GM12878 (cell line): ENCODE measurements at regions of chr1 and their contacts with region 1.

Region 1: GRCh38 chr1:41728403-41729202 is 190.1 kb downstream of the HIVEP3 start:
- DNase-seq: peak; percentile 100
- ATAC-seq: peak; percentile 87
- H3K4me3 ChIP-seq: no peak overlapping the region
- H3K27ac ChIP-seq: peak overlapping the region; percentile 93
- H3K4me1 ChIP-seq: peaks cover 56% of the 10 kb centered on the region
- H3K27me3 ChIP-seq: no peaks in the 10 kb centered on the region
- CTCF ChIP-seq: no peak
- EP300 ChIP-seq: peak; percentile 97
- POLR2A ChIP-seq: no peak
- RAD21 ChIP-seq: peak; percentile 23; the same call in 1 of the 2 replicates

Region 2: GRCh38 chr1:41662061-41662764 is 66.4 kb before region 1 on chr1:
- CTCF ChIA-PET with region 1: interaction called, 25 read pairs
- POLR2A ChIA-PET with region 1: interaction called, 17 read pairs
- RAD21 ChIA-PET with region 1: interaction called, 262 read pairs
- SMC1A ChIA-PET with region 1: interaction called, 48 read pairs
- in situ Hi-C with region 1: no loop called
- intact Hi-C with region 1: loop called (anchors 2 kb)
- DNase-seq: no peak
- ATAC-seq: peak; percentile 74
- H3K4me3 ChIP-seq: peak overlapping the region; percentile 80
- H3K27ac ChIP-seq: peak overlapping the region; percentile 28; the same call in 1 of the 2 replicates
- H3K4me1 ChIP-seq: peaks cover 26% of the 10 kb centered on the region
- H3K27me3 ChIP-seq: no peaks in the 10 kb centered on the region
- CTCF ChIP-seq: no peak
- EP300 ChIP-seq: no peak
- POLR2A ChIP-seq: peak; percentile 35; the same call in 1 of the 2 replicates
- RAD21 ChIP-seq: no peak

Region 3: GRCh38 chr1:41689558-41689981 is 39.0 kb before region 1 on chr1:
- CTCF ChIA-PET with region 1: no interaction called
- POLR2A ChIA-PET with region 1: interaction called, 4 read pairs
- RAD21 ChIA-PET with region 1: interaction called, 10 read pairs
- SMC1A ChIA-PET with region 1: interaction called, 13 read pairs
- in situ Hi-C with region 1: no loop called
- intact Hi-C with region 1: loop called (anchors 5 kb)
- DNase-seq: no peak
- ATAC-seq: no peak
- H3K4me3 ChIP-seq: no peak overlapping the region
- H3K27ac ChIP-seq: no peak overlapping the region
- H3K4me1 ChIP-seq: peaks cover 20% of the 10 kb centered on the region
- H3K27me3 ChIP-seq: no peaks in the 10 kb centered on the region
- CTCF ChIP-seq: no peak
- EP300 ChIP-seq: no peak
- POLR2A ChIP-seq: no peak
- RAD21 ChIP-seq: no peak

Region 4: DNA sequence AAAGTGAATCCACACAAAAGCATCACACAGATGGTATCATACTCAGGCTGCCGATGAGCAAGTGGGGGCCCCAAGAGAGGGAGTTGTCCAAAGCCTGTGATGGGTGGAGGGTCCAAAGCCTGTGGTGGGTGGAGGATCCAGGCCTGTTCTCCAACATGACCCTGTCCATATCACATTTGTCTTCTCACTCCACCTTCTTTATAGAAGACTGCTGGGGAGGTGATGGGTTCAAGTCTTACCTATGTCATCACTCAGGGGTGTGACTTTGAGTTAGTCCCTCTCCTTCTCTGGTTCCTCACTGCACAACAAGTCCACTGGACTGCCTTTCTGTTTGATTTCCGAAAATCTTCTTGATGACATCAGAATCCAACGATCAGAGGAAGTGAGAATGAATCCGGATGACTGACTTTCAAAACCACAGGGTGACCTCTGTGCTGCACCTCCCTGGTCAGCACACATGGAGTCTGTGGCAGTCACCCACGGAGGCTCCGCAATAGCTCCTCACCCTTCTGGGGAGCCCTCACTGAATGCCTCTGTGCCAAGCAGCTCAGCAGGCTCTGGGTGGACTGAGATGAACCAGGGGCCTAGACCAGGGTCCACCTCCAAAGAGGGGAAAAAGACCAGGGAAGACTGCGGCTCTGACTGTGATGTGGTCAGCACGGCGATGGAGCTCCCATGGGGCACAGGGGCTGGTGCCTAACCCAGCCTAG is 23.4 kb after region 1 on chr1:
- CTCF ChIA-PET with region 1: interaction called, 31 read pairs
- POLR2A ChIA-PET with region 1: interaction called, 16 read pairs
- RAD21 ChIA-PET with region 1: interaction called, 85 read pairs
- SMC1A ChIA-PET with region 1: interaction called, 69 read pairs
- in situ Hi-C with region 1: no loop called
- intact Hi-C with region 1: loop called (anchors 1 kb)
- DNase-seq: peak; percentile 86
- ATAC-seq: peak; percentile 83
- H3K4me3 ChIP-seq: peak overlapping the region; percentile 18; the same call in 1 of the 2 replicates
- H3K27ac ChIP-seq: peak overlapping the region; percentile 83
- H3K4me1 ChIP-seq: peaks cover 55% of the 10 kb centered on the region
- H3K27me3 ChIP-seq: no peaks in the 10 kb centered on the region
- CTCF ChIP-seq: no peak
- EP300 ChIP-seq: peak; percentile 77 to 80; a peak in 3 of 4 replicates
- POLR2A ChIP-seq: 0 out of 2 replicates have a peak, but pooled peaks have one; percentile 17
- RAD21 ChIP-seq: no peak; the same call in 1 of the 2 replicates

Region 5: GRCh38 chr1:41868599-41868998 is 140.0 kb after region 1 on chr1:
- CTCF ChIA-PET with region 1: interaction called, 7 read pairs
- POLR2A ChIA-PET with region 1: no interaction called
- RAD21 ChIA-PET with region 1: interaction called, 5 read pairs
- SMC1A ChIA-PET with region 1: interaction called, 3 read pairs
- in situ Hi-C with region 1: no loop called
- intact Hi-C with region 1: loop called (anchors 2 kb)
- DNase-seq: peak; percentile 63
- ATAC-seq: peak; percentile 96
- H3K4me3 ChIP-seq: no peak overlapping the region
- H3K27ac ChIP-seq: peak overlapping the region; percentile 27; the same call in 1 of the 2 replicates
- H3K4me1 ChIP-seq: peaks cover 19% of the 10 kb centered on the region
- H3K27me3 ChIP-seq: no peaks in the 10 kb centered on the region
- CTCF ChIP-seq: peak; percentile 60 to 71 (median 66); a peak in 5 of 6 replicates
- EP300 ChIP-seq: no peak
- POLR2A ChIP-seq: no peak
- RAD21 ChIP-seq: peak; percentile 60

Region 6: DNA sequence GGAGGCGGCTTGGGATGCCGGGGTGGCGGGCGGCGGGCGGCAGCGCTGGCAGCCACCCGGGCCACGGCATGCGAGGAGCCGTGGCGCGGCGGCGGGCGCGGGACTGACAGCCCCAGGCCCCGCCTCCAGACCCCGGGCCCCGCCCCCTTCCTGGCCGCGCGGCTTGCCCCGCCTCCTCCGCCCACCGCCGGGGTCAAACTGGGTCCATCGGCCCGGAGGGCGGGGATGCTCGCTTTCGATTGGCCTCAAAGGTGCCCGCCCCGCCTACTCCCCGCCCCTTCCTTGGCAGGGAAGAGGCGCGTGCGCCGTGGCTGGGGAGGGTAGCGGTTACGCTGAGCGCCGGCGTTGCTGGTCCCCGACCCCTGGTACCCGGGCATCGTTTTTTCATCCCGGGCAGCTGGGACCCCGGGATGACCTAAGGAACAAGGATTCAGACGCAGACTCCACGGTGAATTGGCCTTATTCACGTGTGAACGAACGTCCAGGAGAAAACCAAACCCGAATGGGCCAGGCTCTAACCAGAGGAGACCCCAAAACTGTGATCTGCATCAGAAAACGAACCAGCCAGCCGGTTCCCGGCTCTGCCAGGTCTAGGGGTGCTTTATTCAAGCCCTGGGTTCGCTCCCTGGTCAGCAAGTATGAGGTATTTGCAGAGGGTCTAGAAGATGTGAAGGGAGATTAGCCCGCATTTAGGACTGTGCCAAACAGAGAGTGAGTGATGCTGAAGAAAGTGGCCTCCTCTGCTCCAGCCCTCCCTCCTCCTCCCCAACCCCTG is 307.4 kb after region 1 on chr1:
- CTCF ChIA-PET with region 1: no interaction called
- POLR2A ChIA-PET with region 1: no interaction called
- RAD21 ChIA-PET with region 1: interaction called, 4 read pairs
- SMC1A ChIA-PET with region 1: no interaction called
- in situ Hi-C with region 1: no loop called
- intact Hi-C with region 1: loop called (anchors 10 kb)
- DNase-seq: peak; percentile 55
- ATAC-seq: peak; percentile 90
- H3K4me3 ChIP-seq: peak overlapping the region; percentile 93
- H3K27ac ChIP-seq: peak overlapping the region; percentile 37; the same call in 1 of the 2 replicates
- H3K4me1 ChIP-seq: peaks cover 8% of the 10 kb centered on the region; the same call in 1 of the 2 replicates
- H3K27me3 ChIP-seq: no peaks in the 10 kb centered on the region; a peak in 1 of 4 replicates
- CTCF ChIP-seq: no peak
- EP300 ChIP-seq: no peak
- POLR2A ChIP-seq: peak; percentile 63; the same call in 1 of the 2 replicates
- RAD21 ChIP-seq: no peak